ENCODE measurements at regions of chr6 and their contacts with region 1.

Region 1: GRCh38 chr6:135162678-135163439 is 18.2 kb upstream of the MYB start:
- DNase-seq: peak; percentile 56
- H3K4me3 Mint-ChIP-seq: no peak overlapping the region
- H3K27ac Mint-ChIP-seq: peak overlapping the region; percentile 77
- H3K4me1 Mint-ChIP-seq: peaks cover 58% of the 10 kb centered on the region
- H3K27me3 Mint-ChIP-seq: no peaks in the 10 kb centered on the region

Region 2: DNA sequence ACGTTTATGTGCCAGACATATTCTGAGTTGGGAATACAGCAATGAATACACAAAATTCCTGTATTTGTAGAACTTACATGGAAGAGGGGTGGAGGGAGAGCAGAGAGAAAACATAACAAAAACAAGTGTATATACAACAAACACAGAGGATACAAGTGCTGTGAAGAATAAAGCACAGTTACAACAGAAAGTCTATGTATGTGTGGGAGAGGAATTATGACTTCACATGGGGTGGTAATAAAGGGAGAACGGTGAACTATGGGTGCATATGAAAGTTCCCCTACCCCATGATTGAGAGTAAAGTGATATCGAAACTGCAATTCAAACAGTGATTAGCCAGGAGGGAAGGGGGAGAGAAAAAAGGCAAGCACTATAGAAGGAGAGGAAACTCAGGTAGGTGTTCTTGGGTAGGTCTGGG is 132.8 kb before region 1 on chr6:
- CTCF ChIA-PET with region 1: no interaction called
- intact Hi-C with region 1: loop called (anchors 1 kb)
- DNase-seq: peak; percentile 18
- H3K4me3 Mint-ChIP-seq: peak overlapping the region; percentile 10
- H3K27ac Mint-ChIP-seq: peak overlapping the region; percentile 71
- H3K4me1 Mint-ChIP-seq: peaks cover 63% of the 10 kb centered on the region
- H3K27me3 Mint-ChIP-seq: no peaks in the 10 kb centered on the region

Region 3: GRCh38 chr6:135094403-135094848 is 68.4 kb before region 1 on chr6:
- CTCF ChIA-PET with region 1: interaction called, 6 read pairs
- intact Hi-C with region 1: loop called (anchors 1 kb)
- DNase-seq: peak; percentile 59
- H3K4me3 Mint-ChIP-seq: no peak overlapping the region
- H3K27ac Mint-ChIP-seq: peak overlapping the region; percentile 71
- H3K4me1 Mint-ChIP-seq: peaks cover 56% of the 10 kb centered on the region
- H3K27me3 Mint-ChIP-seq: no peaks in the 10 kb centered on the region

Region 4: DNA sequence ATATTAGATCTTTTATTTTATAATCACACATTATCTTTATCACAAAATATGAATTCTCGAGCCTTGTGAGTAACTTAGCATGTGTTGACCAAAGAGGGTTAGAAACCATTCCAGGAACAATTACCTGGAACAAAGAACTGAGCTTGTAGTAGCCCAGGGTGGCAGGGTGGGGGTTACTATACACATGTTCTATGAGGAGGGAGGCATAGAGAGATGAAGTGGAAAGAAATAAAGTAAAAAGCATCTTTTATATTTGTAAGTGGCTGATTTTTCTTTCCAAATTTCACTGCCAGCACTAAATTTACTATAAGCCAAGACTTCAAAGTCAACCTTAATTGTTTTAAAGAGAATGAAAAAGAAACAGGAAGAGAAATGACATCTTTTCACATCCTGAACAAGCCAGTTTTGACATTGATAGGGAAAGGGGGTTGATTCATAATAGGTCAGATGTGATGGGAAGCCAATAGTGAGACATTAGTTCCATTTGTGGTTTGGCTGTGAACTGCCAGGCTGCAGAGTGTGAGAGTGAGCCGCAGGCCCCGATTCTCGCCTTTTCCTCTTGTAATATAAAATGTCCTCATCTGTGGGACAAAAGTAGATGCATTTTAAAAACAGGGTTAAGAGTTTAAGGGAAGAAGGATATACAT is 34.5 kb before region 1 on chr6:
- CTCF ChIA-PET with region 1: interaction called, 3 read pairs
- intact Hi-C with region 1: loop called (anchors 1 kb)
- DNase-seq: peak; percentile 83
- H3K4me3 Mint-ChIP-seq: peak overlapping the region; percentile 26
- H3K27ac Mint-ChIP-seq: peak overlapping the region; percentile 74
- H3K4me1 Mint-ChIP-seq: peaks cover 43% of the 10 kb centered on the region
- H3K27me3 Mint-ChIP-seq: no peaks in the 10 kb centered on the region

Region 5: GRCh38 chr6:135195522-135195921 is 32.7 kb after region 1 on chr6:
- CTCF ChIA-PET with region 1: interaction called, 3 read pairs
- intact Hi-C with region 1: loop called (anchors 1 kb)
- DNase-seq: no peak
- H3K4me3 Mint-ChIP-seq: no peak overlapping the region
- H3K27ac Mint-ChIP-seq: no peak overlapping the region
- H3K4me1 Mint-ChIP-seq: peaks cover 19% of the 10 kb centered on the region
- H3K27me3 Mint-ChIP-seq: no peaks in the 10 kb centered on the region

Region 6: DNA sequence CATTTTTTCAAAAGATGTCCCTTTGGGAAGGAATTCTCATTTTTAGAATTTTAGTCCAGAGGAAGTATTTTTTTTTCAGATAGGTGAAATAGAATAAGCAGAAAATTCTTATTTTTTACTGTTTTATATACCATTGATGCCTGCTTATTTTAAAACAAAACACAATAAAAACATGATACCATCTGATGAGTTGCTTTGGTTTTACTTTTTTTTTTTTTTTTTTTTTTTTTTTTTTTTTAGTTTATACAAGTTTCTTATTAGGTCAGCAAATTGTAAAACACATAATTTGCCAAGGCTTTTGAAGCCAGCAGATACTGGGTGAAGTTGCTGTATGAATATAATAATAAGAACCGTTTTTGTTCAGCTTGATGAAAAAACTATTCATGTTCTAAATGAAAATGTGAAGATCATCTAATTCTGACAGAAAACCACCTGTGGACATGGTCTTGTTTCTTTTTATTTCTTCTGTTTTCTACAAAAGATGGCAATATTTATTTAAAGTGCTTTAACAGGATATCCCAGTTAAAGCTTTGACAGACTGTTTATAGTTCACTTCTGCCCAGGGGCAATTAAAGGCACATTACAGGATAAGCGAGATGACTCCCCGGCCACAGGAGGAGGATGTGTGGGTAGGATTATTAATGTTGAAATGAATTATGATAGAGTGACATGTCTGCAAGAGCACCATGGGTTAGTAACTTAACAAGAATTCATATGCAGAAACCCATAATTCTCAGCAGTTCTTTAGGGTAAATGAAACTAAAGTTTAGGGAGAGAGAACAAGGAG is 49.4 kb after region 1 on chr6:
- CTCF ChIA-PET with region 1: no interaction called
- intact Hi-C with region 1: no loop called
- DNase-seq: peak; percentile 62
- H3K4me3 Mint-ChIP-seq: no peak overlapping the region
- H3K27ac Mint-ChIP-seq: no peak overlapping the region
- H3K4me1 Mint-ChIP-seq: peaks cover 35% of the 10 kb centered on the region
- H3K27me3 Mint-ChIP-seq: no peaks in the 10 kb centered on the region

Measured in activated naive CD4-positive, alpha-beta T cell treated with anti-CD3 and anti-CD28 coated beads for 36 hours (primary cell).